Testis (tissue), 5 donors: ENCODE measurements at regions of chr1 and their contacts with region 1.

Region 1: GRCh38 chr1:91924146-91924545 is 25.1 kb upstream of the BRDT start:
- DNase-seq: no peak
- H3K4me3 ChIP-seq: no peak overlapping the region
- H3K27ac ChIP-seq: no peak overlapping the region
- H3K4me1 ChIP-seq: peaks cover 4% of the 10 kb centered on the region
- H3K27me3 ChIP-seq: no peaks in the 10 kb centered on the region
- CTCF ChIP-seq: no peak
- POLR2A ChIP-seq: no peak

Region 2: GRCh38 chr1:91511386-91511785 is 412.8 kb before region 1 on chr1:
- intact Hi-C with region 1: loop called (anchors 10 kb)
- DNase-seq: no peak
- H3K4me3 ChIP-seq: no peak overlapping the region
- H3K27ac ChIP-seq: no peak overlapping the region
- H3K4me1 ChIP-seq: peaks cover 6% of the 10 kb centered on the region
- H3K27me3 ChIP-seq: no peaks in the 10 kb centered on the region
- CTCF ChIP-seq: peak; percentile 37 to 65 (median 60)
- POLR2A ChIP-seq: no peak